Left cardiac atrium (tissue), 4 donors: ENCODE measurements at regions of chrX and their contacts with region 1.

Region 1: DNA sequence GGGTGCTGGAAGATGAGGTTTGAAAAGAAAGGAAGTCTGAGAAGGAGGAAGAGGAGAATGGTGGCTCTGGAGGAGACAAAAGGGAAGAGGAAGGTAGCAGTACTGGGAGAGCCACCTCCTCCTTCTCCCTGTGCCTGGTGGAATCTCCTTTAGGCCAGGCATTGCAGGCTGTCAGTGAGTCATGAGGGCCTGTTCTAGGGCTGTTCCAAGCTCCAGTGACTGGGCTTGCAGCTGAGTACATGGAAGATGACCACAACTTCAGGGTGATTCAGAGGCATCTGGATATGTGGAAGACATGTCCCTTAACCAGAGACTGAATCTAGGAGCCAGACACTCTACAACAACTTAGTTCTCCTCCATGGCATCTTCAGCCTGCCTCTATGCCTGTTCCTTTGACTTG is 107.8 kb downstream of the EFNB1 start:
- DNase-seq: no peak
- ATAC-seq: peak in 1 of 2 donors; percentile 86

Region 2: DNA sequence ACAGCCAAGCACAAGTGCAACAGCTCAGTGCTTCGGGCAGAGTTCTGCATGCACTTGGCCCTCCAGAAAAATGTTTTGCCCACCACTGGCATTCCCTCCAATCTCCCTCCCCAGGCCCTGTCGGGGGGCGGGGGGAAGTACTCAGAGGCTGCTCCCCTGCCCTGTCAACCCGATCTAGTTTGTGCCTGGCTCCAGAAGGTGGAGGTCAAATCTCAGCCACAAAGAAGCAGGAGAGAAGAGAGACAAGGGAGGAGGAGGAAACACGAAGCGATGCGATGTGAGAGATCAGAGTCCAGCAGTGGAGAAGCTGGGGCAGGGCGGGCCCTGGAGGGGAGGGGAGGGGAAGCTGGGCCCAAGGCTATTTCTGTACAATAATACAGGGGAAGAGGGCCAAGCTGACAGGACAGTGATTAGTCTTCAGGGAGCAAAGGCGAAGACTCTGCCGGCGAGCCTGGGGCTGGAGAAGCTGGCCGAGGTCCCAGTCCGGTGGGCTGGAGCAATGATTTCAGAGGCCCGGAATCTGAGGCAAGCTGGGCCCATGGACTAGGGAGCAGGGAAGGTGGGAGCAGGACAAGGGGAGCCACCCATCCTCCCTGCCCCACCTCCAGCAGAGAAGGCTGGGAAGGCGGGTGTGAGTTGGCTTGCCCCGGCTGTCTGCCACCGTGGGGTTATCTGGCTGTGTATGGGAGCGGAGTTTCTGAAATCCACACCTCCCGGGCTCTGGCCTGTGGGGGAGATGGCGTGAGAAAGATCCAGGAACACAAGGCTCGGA is 59.4 kb after region 1 on chrX:
- intact Hi-C with region 1: loop called in 1 of 2 experiments (anchors 5 kb)
- DNase-seq: peak; percentile 61
- ATAC-seq: peak; percentile 89 to 93